Activated T-helper 2 cell treated with anti-CD3 and anti-CD28 coated beads, Interferon-gamma antibody, Interleukin-2, Interleukin-4, amounts not matched to agents 10 μg/mL and 5 μg/mL and 100 μg/mL, durations not matched to agents 14 hours and 24 hours and 36 hours (primary cell): ENCODE measurements at regions of chr6 and their contacts with region 1.

Region 1: GRCh38 chr6:70566751-70567382 is at the start of gene SDHAF4:
- DNase-seq: peak; percentile 90
- H3K4me3 Mint-ChIP-seq: peak within 1 kb of the TSS; percentile 85
- H3K27ac Mint-ChIP-seq: peak within 1 kb of the TSS; percentile 80
- H3K4me1 Mint-ChIP-seq: peaks cover 12% of the 10 kb centered on the region
- H3K27me3 Mint-ChIP-seq: no peaks in the 10 kb centered on the region
- total RNA-seq, gene SDHAF4: 10.6 and 12.1 TPM in 2 replicates

Region 2: GRCh38 chr6:70413114-70413991 is 153.5 kb before region 1 on chr6 and contains the start of gene FAM135A:
- intact Hi-C with region 1: loop called (anchors 2 kb)
- DNase-seq: peak; percentile 91
- H3K4me3 Mint-ChIP-seq: peak within 1 kb of the TSS; percentile 98
- H3K27ac Mint-ChIP-seq: peak within 1 kb of the TSS; percentile 90
- H3K4me1 Mint-ChIP-seq: peaks cover 25% of the 10 kb centered on the region
- H3K27me3 Mint-ChIP-seq: peaks cover 14% of the 10 kb centered on the region
- total RNA-seq, gene FAM135A: 8.0 and 9.4 TPM in 2 replicates

Region 3: DNA sequence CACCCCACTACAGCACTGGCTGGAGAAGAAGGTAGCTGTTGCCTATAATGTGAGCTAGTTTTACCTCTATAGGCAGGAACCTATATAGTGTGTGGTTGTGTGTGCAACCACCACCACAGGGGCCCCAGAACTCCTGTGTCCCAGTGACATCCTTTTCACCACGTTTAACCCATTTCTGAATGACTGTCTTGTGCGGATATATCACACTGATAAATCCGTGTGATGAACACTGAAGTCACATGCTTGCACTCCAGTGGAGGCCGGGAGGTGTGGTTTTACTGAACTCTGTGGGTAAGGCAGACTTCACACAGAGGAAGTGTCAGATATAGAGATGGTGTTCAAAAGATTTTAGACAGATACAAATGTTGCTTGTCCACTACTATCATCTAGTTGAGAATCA is 32.3 kb after region 1 on chr6:
- intact Hi-C with region 1: loop called (anchors 1 kb)
- DNase-seq: peak; percentile 42
- H3K4me3 Mint-ChIP-seq: no peak overlapping the region
- H3K27ac Mint-ChIP-seq: no peak overlapping the region
- H3K4me1 Mint-ChIP-seq: peaks cover 11% of the 10 kb centered on the region
- H3K27me3 Mint-ChIP-seq: no peaks in the 10 kb centered on the region